BJ (cell line): ENCODE measurements at regions of chr9 and their contacts with region 1.

Region 1: DNA sequence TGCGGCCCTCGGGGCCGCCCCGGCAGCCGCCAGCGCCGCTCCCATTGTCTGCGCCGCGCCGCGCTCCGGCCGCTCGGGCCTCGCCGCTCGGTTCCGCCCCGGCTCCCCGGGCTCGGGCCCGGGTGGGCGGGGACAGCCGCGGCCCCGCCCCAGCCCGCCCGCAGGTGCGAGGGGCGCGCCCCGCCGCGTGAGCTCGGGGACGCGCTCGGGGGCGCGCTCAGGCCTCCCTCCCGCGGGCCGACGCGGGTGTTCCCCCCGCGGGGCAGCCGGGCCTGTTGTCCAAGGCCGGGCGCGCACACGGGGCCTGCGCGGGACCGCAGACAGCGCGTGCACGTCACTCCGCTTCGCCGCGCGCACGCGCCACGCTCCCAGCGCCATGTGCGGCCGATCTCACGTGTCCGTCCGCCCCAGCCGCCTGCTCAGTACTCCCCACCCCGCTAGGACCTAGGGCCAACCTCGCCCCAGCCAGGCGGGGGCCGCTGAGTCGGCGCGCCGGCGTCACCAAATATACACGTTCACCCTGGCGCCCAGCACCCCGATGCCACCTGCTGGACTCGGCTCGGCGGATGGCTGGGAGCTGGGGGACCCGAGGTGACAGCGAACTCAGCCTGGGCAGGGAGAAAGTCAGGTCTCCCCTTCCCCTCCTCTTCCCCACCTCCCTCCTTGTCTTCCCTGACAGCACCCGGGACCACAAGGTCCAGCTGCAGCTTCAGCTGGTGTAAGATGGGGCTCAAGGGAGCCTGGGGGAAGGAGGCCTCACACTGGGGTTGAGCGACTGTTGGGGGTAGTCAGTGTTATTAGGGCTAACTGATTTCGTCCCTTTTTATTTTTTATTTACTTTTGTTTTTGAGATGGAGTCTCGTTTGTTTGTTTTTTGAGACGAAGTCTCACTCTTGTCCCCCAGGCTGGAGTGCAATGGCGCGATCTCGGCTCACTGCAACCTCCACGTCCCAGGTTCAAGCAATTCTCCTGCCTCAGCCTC is 14.3 kb downstream of the GBGT1 start:
- DNase-seq: peak; percentile 52
- H3K4me3 ChIP-seq: peak overlapping the region; percentile 79
- H3K27me3 ChIP-seq: no peaks in the 10 kb centered on the region
- CTCF ChIP-seq: peak; percentile 24; the same call in 1 of the 2 replicates

Region 2: DNA sequence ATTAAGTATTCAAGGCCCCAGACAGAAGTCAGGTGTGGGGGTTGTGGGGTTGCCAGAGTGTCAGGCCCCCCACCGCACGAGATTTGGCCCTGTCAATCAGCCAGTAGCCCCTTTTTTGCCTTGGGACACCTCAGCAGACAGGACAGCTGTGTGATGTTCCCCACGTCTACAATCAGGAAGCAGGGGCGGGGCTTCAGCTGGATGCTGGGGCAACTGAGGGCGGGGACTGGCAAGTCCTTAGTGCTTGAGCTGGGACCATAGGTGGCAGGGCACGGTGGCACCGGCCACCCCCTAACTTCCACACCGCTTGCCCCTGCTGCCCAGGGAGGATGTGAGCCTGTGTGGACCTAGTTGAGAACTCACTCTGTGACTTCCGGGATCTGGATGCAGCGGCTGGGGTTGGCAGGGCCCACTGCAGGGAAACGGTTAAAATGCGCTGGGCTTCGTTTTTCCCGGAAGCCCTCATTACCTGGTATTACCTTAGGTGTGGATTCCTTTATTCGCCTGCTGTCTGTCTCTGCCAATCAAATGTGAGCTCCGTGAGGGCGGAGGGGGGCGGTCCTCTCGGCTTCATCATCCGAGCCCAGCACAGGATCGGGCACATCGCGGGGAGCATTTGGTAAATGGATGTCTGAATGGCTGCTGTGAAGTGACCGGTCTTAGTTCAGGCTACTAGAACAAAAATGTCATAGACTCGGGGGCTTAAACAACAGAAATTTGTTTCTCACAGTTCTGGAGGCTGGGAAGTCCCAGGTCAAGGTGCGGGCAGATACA is 126.1 kb before region 1 on chr9:
- CTCF ChIA-PET with region 1: interaction called, 38 read pairs
- POLR2A ChIA-PET with region 1: no interaction called
- DNase-seq: no peak
- H3K4me3 ChIP-seq: no peak overlapping the region
- H3K27me3 ChIP-seq: no peaks in the 10 kb centered on the region
- CTCF ChIP-seq: no peak

Region 3: GRCh38 chr9:133048569-133048968 is 100.8 kb before region 1 on chr9:
- CTCF ChIA-PET with region 1: interaction called, 92 read pairs
- POLR2A ChIA-PET with region 1: no interaction called
- DNase-seq: no peak
- H3K4me3 ChIP-seq: no peak overlapping the region
- H3K27me3 ChIP-seq: no peaks in the 10 kb centered on the region
- CTCF ChIP-seq: peak; percentile 54

Region 4: GRCh38 chr9:133094842-133095393 is 54.5 kb before region 1 on chr9:
- CTCF ChIA-PET with region 1: interaction called, 505 read pairs
- POLR2A ChIA-PET with region 1: no interaction called
- DNase-seq: no peak
- H3K4me3 ChIP-seq: no peak overlapping the region
- H3K27me3 ChIP-seq: no peaks in the 10 kb centered on the region
- CTCF ChIP-seq: no peak

Region 5: GRCh38 chr9:133133681-133134418 is 15.6 kb before region 1 on chr9:
- CTCF ChIA-PET with region 1: interaction called, 70 read pairs
- POLR2A ChIA-PET with region 1: no interaction called
- DNase-seq: peak; percentile 90
- H3K4me3 ChIP-seq: no peak overlapping the region
- H3K27me3 ChIP-seq: no peaks in the 10 kb centered on the region
- CTCF ChIP-seq: no peak

Region 6: DNA sequence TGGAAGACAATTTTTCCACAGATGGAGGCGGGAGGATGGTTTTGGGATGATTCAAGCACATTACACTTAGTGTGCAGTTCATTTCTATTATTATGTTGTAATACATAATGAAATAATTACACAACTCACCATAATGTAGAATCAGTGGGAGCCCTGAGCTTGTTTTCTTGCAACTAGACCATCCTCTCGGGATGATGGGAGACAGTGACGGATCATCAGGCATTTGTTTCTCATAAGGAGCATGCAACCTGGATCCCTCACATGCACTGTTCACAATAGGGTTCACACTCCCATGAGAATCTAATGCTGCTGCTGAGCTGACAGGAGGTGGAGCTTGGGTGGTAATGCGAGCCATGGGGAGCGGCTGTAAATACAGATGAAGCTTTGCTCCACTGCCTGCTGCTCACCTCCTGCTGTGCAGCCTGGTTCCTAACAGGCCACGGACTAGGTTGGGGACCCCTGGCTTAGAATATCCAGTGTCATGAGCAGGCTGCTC is 228.4 kb after region 1 on chr9:
- CTCF ChIA-PET with region 1: no interaction called
- POLR2A ChIA-PET with region 1: no interaction called
- DNase-seq: no peak
- H3K4me3 ChIP-seq: no peak overlapping the region
- H3K27me3 ChIP-seq: no peaks in the 10 kb centered on the region
- CTCF ChIP-seq: no peak